ENCODE measurements at regions of chr2 and their contacts with region 1.

Region 1: DNA sequence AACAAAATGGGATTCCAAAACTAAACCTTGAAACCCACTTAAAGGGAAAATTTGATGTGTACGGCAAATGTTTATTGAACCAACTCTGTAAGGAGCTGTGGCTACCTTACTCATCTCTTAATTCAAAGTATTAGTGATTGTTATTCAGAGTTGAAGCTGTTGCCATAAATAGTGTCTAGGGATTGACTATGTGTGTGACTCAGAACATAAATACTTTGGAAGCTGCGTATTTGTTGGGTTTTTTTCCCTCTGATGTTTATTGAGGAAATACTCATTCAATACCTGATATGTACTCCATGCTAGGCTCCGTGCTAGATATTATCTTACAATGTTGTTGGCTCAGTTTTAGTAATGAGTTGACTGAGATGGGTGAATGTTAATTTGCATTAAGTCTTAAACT is 90.4 kb downstream of the PTRHD1 start:
- DNase-seq: no peak
- ATAC-seq: no peak
- H3K4me3 ChIP-seq: no peak overlapping the region
- H3K4me3 Mint-ChIP-seq: no peak overlapping the region
- H3K27ac ChIP-seq: no peak overlapping the region
- H3K27ac Mint-ChIP-seq: no peak overlapping the region
- H3K4me1 ChIP-seq: no peaks in the 10 kb centered on the region
- H3K4me1 Mint-ChIP-seq: no peaks in the 10 kb centered on the region
- H3K27me3 ChIP-seq: no peaks in the 10 kb centered on the region
- H3K27me3 Mint-ChIP-seq: no peaks in the 10 kb centered on the region

Region 2: GRCh38 chr2:24471662-24472061 is 231.1 kb before region 1 on chr2:
- CTCF ChIA-PET with region 1: interaction called in 1 of 2 experiments, 12 read pairs
- POLR2A ChIA-PET with region 1: no interaction called
- DNase-seq: peak in 2 of 35 experiments; percentile 24 to 29
- ATAC-seq: peak; percentile 43 to 63 (median 52)
- H3K4me3 ChIP-seq: no peak overlapping the region
- H3K4me3 Mint-ChIP-seq: no peak overlapping the region
- H3K27ac ChIP-seq: no peak overlapping the region
- H3K27ac Mint-ChIP-seq: no peak overlapping the region
- H3K4me1 ChIP-seq: no peaks in the 10 kb centered on the region
- H3K4me1 Mint-ChIP-seq: no peaks in the 10 kb centered on the region
- H3K27me3 ChIP-seq: no peaks in the 10 kb centered on the region
- H3K27me3 Mint-ChIP-seq: peaks cover 0 to 20% of the 10 kb centered on the region in 2 donors

Region 3: DNA sequence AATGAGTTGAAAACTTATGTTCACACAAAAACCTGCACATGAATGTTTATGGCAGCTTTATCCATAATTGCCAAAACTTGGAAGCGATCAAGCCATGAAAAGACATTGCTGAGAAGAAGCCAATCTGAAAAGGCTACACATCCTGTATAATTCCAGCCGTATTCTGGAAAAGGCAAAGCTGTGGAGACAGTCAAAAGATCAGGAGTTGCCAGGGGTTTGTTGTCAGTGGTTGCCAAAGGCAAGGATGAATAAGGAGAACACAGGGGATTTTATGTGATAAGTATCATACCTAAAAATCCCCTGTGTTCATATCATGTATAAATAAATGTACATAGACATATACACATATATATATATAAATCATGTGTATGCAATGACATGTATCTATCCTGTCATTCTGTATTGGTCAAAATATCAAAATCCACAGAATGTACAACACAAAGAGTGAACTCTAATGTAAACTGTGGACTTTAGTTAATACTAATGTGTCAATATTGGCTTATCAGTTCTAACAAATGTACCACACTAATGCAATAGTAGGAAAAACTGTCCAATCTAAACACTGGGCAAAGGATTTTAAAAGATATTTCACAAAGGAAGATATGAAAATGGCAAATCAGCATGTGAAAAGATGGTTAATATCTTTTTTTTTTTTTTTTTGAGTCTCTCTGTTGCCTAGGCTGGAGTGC is 14.6 kb after region 1 on chr2:
- CTCF ChIA-PET with region 1: no interaction called
- POLR2A ChIA-PET with region 1: no interaction called
- DNase-seq: no peak
- ATAC-seq: no peak
- H3K4me3 ChIP-seq: no peak overlapping the region
- H3K4me3 Mint-ChIP-seq: no peak overlapping the region
- H3K27ac ChIP-seq: no peak overlapping the region
- H3K27ac Mint-ChIP-seq: peak overlapping the region in 1 of 2 donors; percentile 16
- H3K4me1 ChIP-seq: no peaks in the 10 kb centered on the region
- H3K4me1 Mint-ChIP-seq: no peaks in the 10 kb centered on the region
- H3K27me3 ChIP-seq: no peaks in the 10 kb centered on the region
- H3K27me3 Mint-ChIP-seq: no peaks in the 10 kb centered on the region

Measured in T-cell (primary cell).